Transverse colon (tissue), 4 donors: ENCODE measurements at regions of chr1 and their contacts with region 1.

Region 1: GRCh38 chr1:145957443-145958319 is at the start of gene LIX1L:
- DNase-seq: peak; percentile 96
- H3K4me3 ChIP-seq: peak within 1 kb of the TSS; percentile 45 to 80 (median 63)
- H3K27ac ChIP-seq: peak within 1 kb of the TSS; percentile 86 to 96 (median 92)
- H3K4me1 ChIP-seq: peaks cover 18 to 77% (median 54%) of the 10 kb centered on the region in 4 donors
- H3K27me3 ChIP-seq: peaks cover 36% of the 10 kb centered on the region
- CTCF ChIP-seq: no peak
- EP300 ChIP-seq: no peak
- POLR2A ChIP-seq: peak; percentile 73
- total RNA-seq, gene LIX1L: 7.2 to 12.5 (median 9.8) TPM

Region 2: GRCh38 chr1:145918144-145918992 is 39.3 kb before region 1 on chr1 and contains the start of gene PEX11B:
- in situ Hi-C with region 1: no loop called
- intact Hi-C with region 1: loop called (anchors 2 kb)
- DNase-seq: peak; percentile 91
- H3K4me3 ChIP-seq: peak within 1 kb of the TSS; percentile 59 to 84 (median 72)
- H3K27ac ChIP-seq: peak within 1 kb of the TSS; percentile 82 to 91 (median 88)
- H3K4me1 ChIP-seq: peaks cover 15 to 26% (median 21%) of the 10 kb centered on the region in 4 donors
- H3K27me3 ChIP-seq: no peaks in the 10 kb centered on the region
- CTCF ChIP-seq: peak in 1 of 5 experiments; percentile 35
- EP300 ChIP-seq: no peak
- POLR2A ChIP-seq: peak; percentile 74
- total RNA-seq, gene PEX11B: 8.8 to 38.9 (median 27.0) TPM

Region 3: DNA sequence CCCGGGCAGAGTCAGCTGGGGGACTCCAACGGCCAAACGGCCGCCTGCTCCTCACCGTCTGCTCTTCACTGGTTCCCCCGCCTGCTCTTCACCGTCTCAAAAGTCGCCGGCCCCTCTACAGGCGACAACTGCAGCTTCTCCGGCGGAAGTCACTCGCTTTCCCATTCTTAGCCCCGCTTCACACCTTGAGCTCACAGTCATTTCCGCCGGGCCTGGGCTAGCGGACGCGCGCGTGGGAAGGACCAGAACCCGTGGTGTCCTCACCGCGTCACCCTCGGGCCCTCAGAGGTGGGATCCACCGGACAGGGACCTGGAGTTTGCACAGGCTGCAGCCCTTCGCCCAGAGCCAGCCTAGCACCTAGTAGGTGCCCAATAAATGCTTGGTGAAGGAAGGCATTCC is 91.8 kb after region 1 on chr1:
- in situ Hi-C with region 1: no loop called
- intact Hi-C with region 1: no loop called
- DNase-seq: no peak
- H3K4me3 ChIP-seq: no peak overlapping the region
- H3K27ac ChIP-seq: no peak overlapping the region
- H3K4me1 ChIP-seq: peaks cover 0 to 16% (median 2%) of the 10 kb centered on the region in 4 donors
- H3K27me3 ChIP-seq: no peaks in the 10 kb centered on the region
- CTCF ChIP-seq: no peak
- EP300 ChIP-seq: no peak
- POLR2A ChIP-seq: no peak